BJ (cell line): ENCODE measurements at regions of chr4 and their contacts with region 1.

Region 1: DNA sequence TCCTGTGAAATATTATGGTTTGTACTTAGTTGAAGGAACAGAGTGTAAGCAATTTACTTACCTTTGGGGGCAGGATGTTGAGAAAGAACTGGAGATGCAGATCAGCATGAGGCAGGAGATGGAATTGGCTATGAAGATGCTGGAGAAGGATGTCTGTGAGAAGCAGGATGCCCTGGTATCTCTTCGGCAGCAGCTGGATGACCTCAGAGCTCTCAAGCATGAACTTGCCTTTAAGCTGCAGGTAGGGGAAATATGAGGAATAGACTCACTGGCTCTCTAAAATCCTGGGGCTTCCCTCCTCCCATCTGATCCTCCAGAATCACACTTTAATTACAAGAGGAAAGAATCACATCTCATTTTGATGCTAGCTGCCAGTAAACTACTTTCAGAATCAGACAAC is 51.0 kb downstream of the GRSF1 start:
- DNase-seq: no peak
- H3K4me3 ChIP-seq: no peak overlapping the region
- H3K27me3 ChIP-seq: no peaks in the 10 kb centered on the region
- CTCF ChIP-seq: no peak

Region 2: GRCh38 chr4:70651864-70652506 is 136.7 kb before region 1 on chr4:
- CTCF ChIA-PET with region 1: no interaction called
- POLR2A ChIA-PET with region 1: no interaction called
- DNase-seq: no peak
- H3K4me3 ChIP-seq: no peak overlapping the region
- H3K27me3 ChIP-seq: no peaks in the 10 kb centered on the region
- CTCF ChIP-seq: peak; percentile 53

Region 3: GRCh38 chr4:70666369-70666768 is 122.4 kb before region 1 on chr4 and contains the start of gene JCHAIN:
- CTCF ChIA-PET with region 1: no interaction called
- POLR2A ChIA-PET with region 1: no interaction called
- DNase-seq: no peak
- H3K4me3 ChIP-seq: no peak within 1 kb of the TSS; the same call in 1 of the 2 replicates
- H3K27me3 ChIP-seq: no peaks in the 10 kb centered on the region
- CTCF ChIP-seq: no peak
- polyA plus RNA-seq, gene JCHAIN: 8.5 and 14.9 TPM in 2 replicates

Region 4: DNA sequence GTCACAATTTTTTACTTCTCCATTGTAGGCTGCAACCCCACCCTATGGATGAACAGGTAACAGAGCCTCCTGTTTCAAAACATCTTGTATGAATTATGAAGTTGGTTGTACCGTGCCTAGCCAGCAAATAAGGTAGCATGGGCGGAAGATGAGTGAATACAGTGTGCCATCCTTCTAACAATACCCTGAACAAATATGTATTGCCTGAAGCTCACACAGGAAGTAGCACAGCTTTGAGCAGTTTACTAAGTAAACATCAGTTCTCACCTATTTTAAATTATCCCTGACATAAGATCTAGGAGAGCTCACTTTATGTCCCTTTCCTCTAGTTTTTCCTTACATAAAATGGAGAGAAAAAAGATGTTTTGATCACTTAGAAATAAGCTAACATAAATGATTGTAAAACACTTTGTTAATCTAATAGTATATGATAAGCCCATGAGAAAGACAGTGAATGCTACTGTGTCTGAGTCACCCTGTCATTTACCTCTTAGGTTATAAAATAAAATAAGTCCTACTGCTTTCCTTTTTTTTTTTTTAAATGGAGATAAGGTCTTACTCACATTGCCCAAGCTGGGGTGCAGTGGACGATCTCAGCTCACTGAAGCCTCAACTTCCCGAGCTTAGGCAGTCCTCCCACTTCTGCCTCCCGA is 14.3 kb after region 1 on chr4:
- CTCF ChIA-PET with region 1: no interaction called
- POLR2A ChIA-PET with region 1: interaction called, 10 read pairs
- DNase-seq: no peak
- H3K4me3 ChIP-seq: no peak overlapping the region
- H3K27me3 ChIP-seq: no peaks in the 10 kb centered on the region
- CTCF ChIP-seq: no peak

Region 5: GRCh38 chr4:70874268-70875156 is 85.8 kb after region 1 on chr4:
- CTCF ChIA-PET with region 1: no interaction called
- POLR2A ChIA-PET with region 1: no interaction called
- DNase-seq: no peak
- H3K4me3 ChIP-seq: no peak overlapping the region
- H3K27me3 ChIP-seq: no peaks in the 10 kb centered on the region
- CTCF ChIP-seq: no peak